Astrocyte of the cerebellum (primary cell): ENCODE measurements at regions of chr11 and their contacts with region 1.

Region 1: DNA sequence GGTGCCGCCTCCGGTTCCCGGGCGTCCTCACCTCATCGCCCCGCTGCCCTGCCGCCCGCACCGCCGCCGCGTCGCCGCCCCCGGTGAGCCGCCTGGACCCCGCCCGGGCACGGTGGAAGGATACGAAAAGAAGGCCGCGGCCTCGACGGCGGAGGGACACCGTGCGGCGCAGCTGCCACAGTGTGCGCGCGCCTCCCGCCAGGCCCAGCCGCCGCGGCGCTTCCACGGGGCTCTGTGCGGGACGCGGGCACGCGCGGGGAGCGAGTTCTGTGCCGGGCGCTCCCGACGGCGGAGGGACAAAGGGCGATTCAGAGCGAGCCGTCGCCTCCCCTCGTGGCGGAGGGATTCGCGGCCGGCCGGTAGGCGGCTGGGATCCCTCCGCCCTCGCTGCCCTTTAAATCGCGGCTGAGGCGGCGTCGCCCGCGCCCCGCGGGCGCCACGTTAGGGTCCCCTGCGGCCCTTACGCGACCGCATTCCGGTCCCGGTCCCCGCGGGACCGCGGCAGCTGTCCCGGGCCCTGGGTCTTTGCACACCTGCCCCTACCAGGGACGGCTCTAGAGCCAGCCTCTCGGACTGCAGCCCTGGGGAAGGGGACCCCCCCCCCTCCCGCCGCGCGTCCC is 569 bp upstream of the KMT5B start:
- DNase-seq: peak; percentile 87
- H3K4me3 ChIP-seq: peak overlapping the region; percentile 93
- CTCF ChIP-seq: no peak

Region 2: GRCh38 chr11:68266121-68266891 is 52.6 kb after region 1 on chr11:
- in situ Hi-C with region 1: loop called (anchors 5 kb)
- DNase-seq: no peak
- H3K4me3 ChIP-seq: no peak overlapping the region
- CTCF ChIP-seq: no peak

Region 3: DNA sequence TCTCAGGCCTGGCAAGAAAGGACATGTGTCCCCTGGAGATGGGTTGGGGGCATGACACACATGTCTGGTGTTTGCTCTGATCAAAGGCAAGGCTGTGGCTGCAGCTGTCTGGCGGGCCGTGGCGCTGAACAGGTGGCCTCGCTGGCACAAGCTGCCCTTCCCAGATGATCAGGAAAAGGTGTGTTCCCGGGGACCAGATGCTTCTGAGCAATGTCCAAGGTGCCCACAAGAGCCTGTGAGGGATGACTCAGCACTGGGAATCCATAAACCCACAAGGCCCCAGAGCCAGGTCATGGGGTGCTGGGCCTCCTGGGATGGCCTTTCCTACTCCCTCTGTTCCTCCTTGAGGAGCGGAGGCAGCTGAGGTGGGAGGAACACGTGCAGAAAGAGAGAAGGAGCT is 89.0 kb after region 1 on chr11:
- in situ Hi-C with region 1: loop called (anchors 5 kb)
- DNase-seq: no peak
- H3K4me3 ChIP-seq: no peak overlapping the region
- CTCF ChIP-seq: no peak